Activated CD8-positive, alpha-beta T cell treated with anti-CD3 and anti-CD28 coated beads, Interleukin-2, amount 10 ng/mL, durations not matched to agents 7 days and 5 days (primary cell): ENCODE measurements at regions of chr1 and their contacts with region 1.

Region 1: GRCh38 chr1:55362558-55362957 is 147.4 kb upstream of the USP24 start:
- DNase-seq: no peak
- ATAC-seq: no peak
- H3K4me3 Mint-ChIP-seq: no peak overlapping the region
- H3K27ac Mint-ChIP-seq: no peak overlapping the region
- H3K4me1 Mint-ChIP-seq: peaks cover 9% of the 10 kb centered on the region
- H3K27me3 Mint-ChIP-seq: peaks cover 3% of the 10 kb centered on the region

Region 2: GRCh38 chr1:55375617-55376258 is 13.2 kb after region 1 on chr1:
- CTCF ChIA-PET with region 1: interaction called, 33 read pairs
- POLR2A ChIA-PET with region 1: no interaction called
- DNase-seq: peak; percentile 56
- ATAC-seq: peak; percentile 49
- H3K4me3 Mint-ChIP-seq: no peak overlapping the region
- H3K27ac Mint-ChIP-seq: no peak overlapping the region
- H3K4me1 Mint-ChIP-seq: no peaks in the 10 kb centered on the region
- H3K27me3 Mint-ChIP-seq: no peaks in the 10 kb centered on the region